ENCODE measurements at regions of chr2 and their contacts with region 1.

Region 1: GRCh38 chr2:79219383-79219988 is 59.9 kb upstream of the REG3A start:
- DNase-seq: peak; percentile 36
- H3K4me3 ChIP-seq: no peak overlapping the region; a peak in 1 of 4 replicates
- H3K27ac ChIP-seq: no peak overlapping the region
- H3K4me1 ChIP-seq: no peaks in the 10 kb centered on the region
- H3K27me3 ChIP-seq: no peaks in the 10 kb centered on the region
- CTCF ChIP-seq: peak; percentile 68
- EP300 ChIP-seq: no peak
- RAD21 ChIP-seq: peak; percentile 85

Region 2: DNA sequence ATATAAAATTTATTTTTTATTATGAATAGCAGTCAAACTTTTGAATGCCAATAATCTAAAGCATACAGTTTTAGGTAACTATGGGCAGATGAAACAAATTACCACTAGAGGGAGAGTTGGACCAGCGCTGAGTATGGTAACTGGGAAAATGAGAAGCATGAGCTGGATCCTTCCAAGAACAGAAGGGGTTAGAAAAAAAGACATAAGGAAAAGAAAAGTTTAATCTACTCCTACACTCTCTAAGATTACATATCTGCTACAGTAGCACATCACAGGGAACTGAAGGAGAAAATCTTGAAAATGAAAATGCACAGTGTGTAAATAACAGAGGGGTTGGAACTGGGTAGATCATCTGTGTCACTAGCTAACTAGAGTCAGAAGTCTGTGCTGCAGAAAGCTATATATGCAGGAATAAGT is 178.4 kb before region 1 on chr2:
- CTCF ChIA-PET with region 1: interaction called, 35 read pairs
- POLR2A ChIA-PET with region 1: no interaction called
- DNase-seq: peak; percentile 19
- H3K4me3 ChIP-seq: no peak overlapping the region
- H3K27ac ChIP-seq: no peak overlapping the region
- H3K4me1 ChIP-seq: peaks cover 0 to 3% of the 10 kb centered on the region in 2 experiments; a peak in 1 of 4 replicates
- H3K27me3 ChIP-seq: no peaks in the 10 kb centered on the region
- CTCF ChIP-seq: no peak; the same call in 1 of the 2 replicates
- EP300 ChIP-seq: no peak
- RAD21 ChIP-seq: peak; percentile 73

Region 3: GRCh38 chr2:79855264-79856006 is 635.9 kb after region 1 on chr2:
- CTCF ChIA-PET with region 1: interaction called, 22 read pairs
- POLR2A ChIA-PET with region 1: no interaction called
- DNase-seq: peak; percentile 59
- H3K4me3 ChIP-seq: no peak overlapping the region
- H3K27ac ChIP-seq: no peak overlapping the region
- H3K4me1 ChIP-seq: peaks cover 0 to 8% of the 10 kb centered on the region in 2 experiments; a peak in 2 of 4 replicates
- H3K27me3 ChIP-seq: no peaks in the 10 kb centered on the region
- CTCF ChIP-seq: peak; percentile 38
- EP300 ChIP-seq: no peak
- RAD21 ChIP-seq: peak; percentile 68

Region 4: GRCh38 chr2:79860228-79861058 is 641.0 kb after region 1 on chr2:
- CTCF ChIA-PET with region 1: interaction called, 22 read pairs
- POLR2A ChIA-PET with region 1: no interaction called
- DNase-seq: peak; percentile 63
- H3K4me3 ChIP-seq: no peak overlapping the region
- H3K27ac ChIP-seq: no peak overlapping the region
- H3K4me1 ChIP-seq: peaks cover 0 to 2% of the 10 kb centered on the region in 2 experiments; a peak in 1 of 4 replicates
- H3K27me3 ChIP-seq: no peaks in the 10 kb centered on the region
- CTCF ChIP-seq: peak; percentile 59
- EP300 ChIP-seq: no peak
- RAD21 ChIP-seq: peak; percentile 90

Region 5: DNA sequence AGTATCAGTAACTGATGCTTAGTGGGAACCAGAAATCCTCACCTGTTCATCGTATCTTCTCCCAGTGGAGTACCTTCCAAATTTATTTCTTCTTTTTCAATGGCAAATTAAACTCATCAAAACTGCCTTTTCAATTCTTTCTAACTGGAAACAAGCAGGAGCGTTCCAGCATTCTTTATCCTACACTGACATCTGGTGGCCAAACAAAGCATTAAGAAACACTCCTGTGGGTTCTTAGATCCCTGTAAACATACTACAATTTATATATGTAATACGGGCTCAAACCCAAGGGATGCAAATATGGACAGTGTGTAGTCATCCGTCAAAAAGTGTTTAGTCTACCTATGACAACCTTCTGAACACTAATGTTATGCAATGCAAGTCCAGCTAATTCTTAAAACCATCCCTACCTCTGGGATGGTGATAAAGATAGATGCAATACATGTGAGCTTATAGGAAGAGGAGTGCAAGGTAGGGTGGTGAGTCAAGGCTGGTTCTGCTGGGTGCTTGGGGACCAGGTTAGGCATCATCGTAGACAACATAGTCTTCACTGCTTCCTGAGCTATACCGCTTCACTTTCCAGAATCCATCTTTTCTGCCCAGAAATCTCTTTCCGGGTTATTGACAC is 668.4 kb after region 1 on chr2:
- CTCF ChIA-PET with region 1: interaction called, 25 read pairs
- POLR2A ChIA-PET with region 1: no interaction called
- DNase-seq: peak; percentile 54
- H3K4me3 ChIP-seq: no peak overlapping the region; a peak in 1 of 4 replicates
- H3K27ac ChIP-seq: no peak overlapping the region
- H3K4me1 ChIP-seq: no peaks in the 10 kb centered on the region; a peak in 1 of 4 replicates
- H3K27me3 ChIP-seq: no peaks in the 10 kb centered on the region
- CTCF ChIP-seq: peak; percentile 79
- EP300 ChIP-seq: no peak
- RAD21 ChIP-seq: peak; percentile 95

Measured in SK-N-SH (cell line).